SK-N-SH (cell line): ENCODE measurements at regions of chr17 and their contacts with region 1.

Region 1: GRCh38 chr17:72725433-72726068 is 366.9 kb downstream of the SLC39A11 start:
- DNase-seq: peak; percentile 78
- H3K4me3 ChIP-seq: no peak overlapping the region
- H3K27ac ChIP-seq: no peak overlapping the region
- H3K4me1 ChIP-seq: no peaks in the 10 kb centered on the region
- H3K27me3 ChIP-seq: no peaks in the 10 kb centered on the region
- CTCF ChIP-seq: peak; percentile 100
- EP300 ChIP-seq: no peak
- RAD21 ChIP-seq: peak; percentile 99

Region 2: GRCh38 chr17:72542317-72542716 is 183.2 kb before region 1 on chr17:
- CTCF ChIA-PET with region 1: no interaction called
- POLR2A ChIA-PET with region 1: no interaction called
- DNase-seq: no peak
- H3K4me3 ChIP-seq: no peak overlapping the region
- H3K27ac ChIP-seq: no peak overlapping the region
- H3K4me1 ChIP-seq: peaks cover 9 to 14% of the 10 kb centered on the region in 2 experiments
- H3K27me3 ChIP-seq: no peaks in the 10 kb centered on the region
- CTCF ChIP-seq: no peak
- EP300 ChIP-seq: no peak
- RAD21 ChIP-seq: no peak

Region 3: DNA sequence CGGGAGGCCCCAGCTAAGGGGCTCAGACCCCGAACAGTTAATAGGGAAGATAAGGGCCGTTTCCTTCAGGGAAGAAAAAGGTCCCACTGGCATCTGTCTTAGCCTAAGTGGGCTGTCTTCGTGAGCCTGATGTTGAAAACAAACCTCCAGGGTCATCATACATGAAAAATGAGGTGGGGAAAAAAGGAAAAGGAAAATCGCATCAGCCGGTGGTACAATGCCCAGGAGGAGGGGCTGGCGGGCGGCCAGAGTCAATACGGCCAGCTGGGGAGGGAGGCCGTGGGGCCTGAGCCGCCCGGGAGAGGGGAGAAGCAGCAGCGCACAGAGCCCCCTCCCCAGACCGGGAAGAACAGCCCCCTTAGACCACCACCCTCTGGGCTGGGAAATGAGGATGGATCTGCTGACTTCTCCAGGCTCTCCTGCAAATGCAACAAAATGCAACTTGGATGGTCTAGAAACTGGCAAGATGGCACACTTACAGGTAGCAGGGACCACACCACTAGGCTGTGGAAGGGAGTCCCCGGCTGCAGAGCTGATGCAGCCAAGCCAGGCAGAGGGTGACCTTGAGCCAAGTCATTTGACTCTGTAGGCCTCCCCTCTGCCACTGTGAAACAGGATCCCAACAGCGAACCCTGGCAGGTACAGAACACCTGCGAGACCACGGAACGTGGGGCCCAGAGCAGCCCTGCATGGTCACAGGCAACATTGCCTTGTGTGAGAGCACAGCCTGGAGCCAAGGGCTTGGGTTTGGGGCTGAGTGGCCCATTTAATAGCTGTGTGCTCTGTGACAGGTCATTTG is 156.2 kb before region 1 on chr17:
- CTCF ChIA-PET with region 1: interaction called, 38 read pairs
- POLR2A ChIA-PET with region 1: no interaction called
- DNase-seq: peak; percentile 58
- H3K4me3 ChIP-seq: no peak overlapping the region
- H3K27ac ChIP-seq: no peak overlapping the region
- H3K4me1 ChIP-seq: peaks cover 0 to 19% of the 10 kb centered on the region in 2 experiments; a peak in 1 of 4 replicates
- H3K27me3 ChIP-seq: no peaks in the 10 kb centered on the region
- CTCF ChIP-seq: no peak
- EP300 ChIP-seq: no peak
- RAD21 ChIP-seq: no peak

Region 4: GRCh38 chr17:72705905-72706395 is 19.6 kb before region 1 on chr17:
- CTCF ChIA-PET with region 1: interaction called, 36 read pairs
- POLR2A ChIA-PET with region 1: no interaction called
- DNase-seq: no peak
- H3K4me3 ChIP-seq: no peak overlapping the region
- H3K27ac ChIP-seq: no peak overlapping the region
- H3K4me1 ChIP-seq: peaks cover 0 to 6% of the 10 kb centered on the region in 2 experiments; a peak in 1 of 4 replicates
- H3K27me3 ChIP-seq: no peaks in the 10 kb centered on the region
- CTCF ChIP-seq: no peak
- EP300 ChIP-seq: no peak
- RAD21 ChIP-seq: no peak

Region 5: DNA sequence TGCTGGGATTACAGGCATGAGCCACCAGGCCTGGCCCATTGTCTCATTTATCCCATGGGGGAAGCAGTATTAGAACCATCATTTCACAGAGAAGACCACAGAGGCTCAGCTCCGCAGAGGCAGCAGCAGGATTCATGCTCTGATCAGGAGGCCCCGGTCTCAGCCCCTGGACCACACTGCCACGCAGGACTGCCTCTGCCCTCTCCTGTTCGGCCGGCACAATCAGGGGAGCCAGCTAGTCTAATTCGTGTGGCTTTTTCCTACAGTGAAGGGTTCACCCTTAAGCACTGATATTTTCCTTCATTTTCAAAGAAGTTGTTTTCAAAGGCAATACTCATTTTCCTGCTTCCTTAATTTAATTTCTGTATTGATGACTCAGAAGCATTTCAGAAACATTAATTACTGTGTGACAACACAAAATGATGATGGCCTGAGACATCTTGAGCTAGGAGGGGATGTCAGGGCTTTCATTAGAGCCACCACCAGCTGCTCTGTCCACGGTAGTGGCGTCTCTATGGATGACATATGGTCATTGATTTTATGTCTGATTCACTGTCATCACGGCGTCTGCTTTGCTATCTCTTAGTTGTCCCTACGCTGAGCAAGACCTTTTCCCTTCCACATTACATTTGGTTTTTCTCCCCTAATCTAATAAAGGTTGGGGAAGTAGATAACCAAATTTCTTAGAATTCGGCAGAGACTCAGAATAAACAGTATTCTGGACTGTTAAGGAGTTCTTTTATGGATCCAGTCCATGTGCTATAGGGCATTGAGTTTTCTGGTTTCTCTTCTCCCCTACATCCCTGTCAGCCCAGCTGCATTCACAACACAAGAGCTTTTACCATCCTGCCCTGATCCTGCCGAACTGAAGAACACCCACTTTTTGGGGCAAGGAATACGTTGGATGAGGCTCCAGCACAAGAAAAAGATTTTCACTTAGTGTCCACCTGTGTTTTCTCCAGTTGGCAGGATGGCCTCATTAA is 52.9 kb after region 1 on chr17:
- CTCF ChIA-PET with region 1: interaction called, 14 read pairs
- POLR2A ChIA-PET with region 1: no interaction called
- DNase-seq: peak; percentile 75
- H3K4me3 ChIP-seq: no peak overlapping the region
- H3K27ac ChIP-seq: peak overlapping the region; percentile 15 to 73; a peak in 2 of 4 replicates
- H3K4me1 ChIP-seq: peaks cover 3 to 19% of the 10 kb centered on the region in 2 experiments; a peak in 1 of 4 replicates
- H3K27me3 ChIP-seq: no peaks in the 10 kb centered on the region
- CTCF ChIP-seq: no peak
- EP300 ChIP-seq: peak in 1 of 2 experiments; percentile 74; a peak in 2 of 4 replicates
- RAD21 ChIP-seq: peak; percentile 29; the same call in 1 of the 2 replicates

Region 6: DNA sequence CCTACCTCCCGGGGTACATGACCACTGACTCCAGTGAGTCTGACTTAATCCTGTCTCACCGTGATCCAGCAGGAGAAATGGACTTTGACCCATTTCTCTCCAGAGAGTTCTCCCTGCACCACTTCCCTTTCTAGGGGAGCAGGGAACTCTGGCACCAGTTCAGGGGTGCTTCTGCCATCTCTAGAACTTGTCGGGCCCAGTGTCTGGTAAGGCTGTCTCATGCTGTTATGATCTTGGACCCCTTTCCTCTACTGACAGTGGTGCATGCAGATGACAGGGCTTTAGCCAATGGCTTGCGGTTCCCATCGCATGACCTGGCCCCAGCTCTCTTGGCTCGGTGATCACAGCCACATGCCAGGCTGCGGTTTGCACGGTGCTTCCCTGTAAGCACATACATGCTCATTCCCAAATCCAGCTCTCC is 305.0 kb after region 1 on chr17:
- CTCF ChIA-PET with region 1: interaction called, 10 read pairs
- POLR2A ChIA-PET with region 1: no interaction called
- DNase-seq: no peak
- H3K4me3 ChIP-seq: no peak overlapping the region
- H3K27ac ChIP-seq: no peak overlapping the region
- H3K4me1 ChIP-seq: peaks cover 5 to 15% of the 10 kb centered on the region in 2 experiments; a peak in 1 of 4 replicates
- H3K27me3 ChIP-seq: no peaks in the 10 kb centered on the region
- CTCF ChIP-seq: no peak
- EP300 ChIP-seq: no peak
- RAD21 ChIP-seq: no peak

Region 7: DNA sequence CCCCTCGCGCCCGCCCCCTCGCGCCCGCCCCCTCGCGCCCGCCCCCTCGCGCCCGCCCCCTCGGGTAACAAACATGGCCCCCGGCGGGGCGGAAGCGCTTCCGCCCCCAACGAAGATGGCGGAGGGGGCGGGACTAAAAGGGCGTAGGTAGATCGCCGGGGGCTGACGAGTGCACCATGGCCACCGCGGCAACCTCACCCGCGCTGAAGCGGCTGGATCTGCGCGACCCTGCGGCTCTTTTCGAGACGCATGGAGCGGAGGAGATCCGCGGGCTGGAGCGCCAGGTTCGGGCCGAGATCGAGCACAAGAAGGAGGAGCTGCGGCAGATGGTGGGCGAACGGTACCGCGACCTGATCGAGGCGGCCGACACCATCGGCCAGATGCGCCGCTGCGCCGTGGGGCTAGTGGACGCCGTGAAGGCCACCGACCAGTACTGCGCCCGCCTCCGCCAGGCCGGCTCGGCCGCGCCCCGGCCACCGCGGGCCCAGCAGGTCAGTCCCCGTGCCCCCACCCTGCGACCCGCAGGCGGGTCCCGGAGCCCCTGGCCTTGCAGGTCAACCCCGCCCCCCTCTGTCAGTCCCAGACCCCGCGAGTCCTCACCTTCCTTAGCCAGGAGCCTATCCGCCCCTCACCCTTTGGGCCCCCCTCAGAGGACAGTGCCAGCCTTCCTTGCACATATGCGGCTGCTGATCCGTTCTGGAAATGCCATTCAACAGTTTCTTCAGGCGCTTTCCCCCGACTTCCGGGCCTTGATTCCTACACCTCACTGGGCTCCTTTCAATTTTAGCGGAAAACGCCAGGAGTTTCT is 467.5 kb after region 1 on chr17 and contains the start of gene COG1:
- CTCF ChIA-PET with region 1: interaction called, 501 read pairs
- POLR2A ChIA-PET with region 1: interaction called, 9 read pairs
- DNase-seq: peak; percentile 100
- H3K4me3 ChIP-seq: peak within 1 kb of the TSS; percentile 73 to 76
- H3K27ac ChIP-seq: peak within 1 kb of the TSS; percentile 85 to 95
- H3K4me1 ChIP-seq: peaks cover 5 to 8% of the 10 kb centered on the region in 2 experiments; a peak in 2 of 4 replicates
- H3K27me3 ChIP-seq: no peaks in the 10 kb centered on the region
- CTCF ChIP-seq: no peak
- EP300 ChIP-seq: no peak
- RAD21 ChIP-seq: no peak
- polyA plus RNA-seq, gene COG1: 52.8 and 53.1 TPM in 2 replicates

Region 8: DNA sequence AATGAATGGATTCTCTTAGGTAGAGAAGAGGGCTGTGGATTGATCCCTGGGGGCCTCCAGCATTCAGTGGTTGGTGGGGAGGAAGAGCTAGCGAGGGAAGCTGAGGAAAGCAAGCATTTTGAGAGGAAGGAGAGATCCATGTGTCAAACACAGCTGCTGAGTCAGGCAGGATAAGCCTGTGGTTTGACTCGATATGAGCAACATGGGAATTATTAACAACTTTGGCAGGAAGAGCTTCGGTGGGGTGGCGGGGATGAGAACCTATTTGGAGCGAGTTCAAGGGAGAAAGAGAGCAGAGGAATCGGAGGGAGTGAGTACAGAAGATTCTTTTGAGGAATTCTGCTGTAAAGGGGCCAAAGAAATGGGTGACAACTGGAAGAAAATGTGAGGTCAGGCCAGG is 645.7 kb after region 1 on chr17:
- CTCF ChIA-PET with region 1: interaction called, 72 read pairs
- POLR2A ChIA-PET with region 1: no interaction called
- DNase-seq: no peak
- H3K4me3 ChIP-seq: no peak overlapping the region
- H3K27ac ChIP-seq: no peak overlapping the region
- H3K4me1 ChIP-seq: peaks cover 6 to 8% of the 10 kb centered on the region in 2 experiments; a peak in 2 of 4 replicates
- H3K27me3 ChIP-seq: 0 out of 2 replicates have a peak, but pooled peaks cover 14% of the 10 kb centered on the region
- CTCF ChIP-seq: no peak
- EP300 ChIP-seq: no peak
- RAD21 ChIP-seq: no peak